Mammary epithelial cell (primary cell): ENCODE measurements at regions of chr14 and their contacts with region 1.

Region 1: DNA sequence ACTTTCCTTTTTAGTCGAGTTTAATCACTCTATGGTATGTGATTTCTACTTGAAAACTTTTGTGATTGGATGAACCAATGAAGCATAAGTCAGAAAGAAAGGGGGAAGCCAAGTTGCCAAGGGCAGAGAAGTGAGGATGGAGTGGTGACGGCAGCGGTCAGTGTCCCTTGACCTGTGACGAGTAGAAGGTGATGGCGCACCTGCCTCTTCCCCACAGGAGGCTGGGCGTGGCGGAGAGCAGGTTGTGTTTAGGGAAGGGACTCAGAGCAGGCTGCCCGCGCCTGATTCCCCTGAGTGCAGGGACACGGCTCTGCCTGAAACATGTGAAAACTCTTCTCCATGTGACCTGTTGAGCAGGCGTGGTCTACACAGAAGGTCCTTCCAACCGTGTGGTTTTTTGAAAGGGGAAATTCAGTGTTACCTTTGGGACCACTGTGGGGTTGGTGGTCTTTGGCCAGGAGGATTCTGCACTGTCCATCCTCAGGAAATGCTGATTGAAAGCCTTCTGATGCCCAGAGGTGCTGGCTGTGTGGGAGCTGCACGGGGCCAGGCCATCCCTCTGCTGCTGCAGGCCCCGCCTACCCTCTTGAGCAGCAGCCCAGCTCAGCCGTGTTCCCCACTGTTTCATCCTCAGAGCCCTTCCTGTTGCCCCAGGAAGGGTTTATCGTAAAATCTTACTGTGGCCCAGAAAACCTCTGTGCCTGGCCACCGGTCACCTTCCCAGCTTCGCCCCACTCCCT is 23.5 kb upstream of the AMN start:
- DNase-seq: no peak
- H3K4me3 ChIP-seq: no peak overlapping the region
- H3K27ac ChIP-seq: no peak overlapping the region
- H3K4me1 ChIP-seq: no peaks in the 10 kb centered on the region
- H3K27me3 ChIP-seq: no peaks in the 10 kb centered on the region
- CTCF ChIP-seq: no peak

Region 2: DNA sequence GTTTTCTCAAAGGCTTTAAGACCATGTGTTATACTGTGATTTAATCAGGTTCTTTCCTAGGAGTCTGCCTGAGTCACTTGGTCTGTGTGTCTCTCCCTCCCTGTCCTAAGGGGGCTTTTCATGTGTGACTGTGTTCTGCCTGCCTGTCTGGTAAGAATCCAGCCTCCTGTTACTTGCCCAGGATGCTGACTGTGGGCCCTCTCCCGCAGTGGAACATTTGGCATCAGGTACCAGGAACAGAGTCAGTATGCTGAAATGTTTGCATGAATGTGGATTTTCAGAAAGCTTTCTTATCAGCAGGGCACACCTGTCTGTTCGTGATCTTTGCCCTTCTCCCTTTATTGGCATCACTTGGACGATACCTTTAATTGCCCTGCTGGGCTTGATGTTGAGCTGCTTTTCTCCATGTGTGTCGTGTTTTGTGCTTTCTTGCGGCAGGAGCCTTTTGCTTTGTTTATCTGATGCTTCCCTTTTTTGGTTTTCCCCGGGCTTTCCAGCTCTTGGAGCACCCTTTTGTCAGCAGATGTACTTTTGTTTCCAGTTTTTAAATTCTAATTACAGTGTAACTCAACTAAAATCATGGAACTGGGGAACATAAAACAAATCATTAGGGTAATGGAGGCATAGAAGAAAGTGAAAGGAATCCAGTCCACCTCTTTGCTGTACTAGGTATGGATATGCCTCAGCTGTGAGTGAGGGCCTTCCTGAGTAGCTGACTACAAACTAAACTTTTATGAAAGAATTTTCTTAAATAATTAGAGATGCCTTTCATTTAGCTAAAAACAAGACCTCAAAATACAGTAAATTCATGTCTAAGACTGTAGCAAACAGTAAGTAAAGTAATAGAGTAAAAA is 49.2 kb before region 1 on chr14:
- CTCF ChIA-PET with region 1: no interaction called
- dilution Hi-C with region 1: loop called (anchors 5 kb)
- in situ Hi-C with region 1: no loop called
- intact Hi-C with region 1: no loop called
- DNase-seq: peak; percentile 30
- H3K4me3 ChIP-seq: no peak overlapping the region
- H3K27ac ChIP-seq: no peak overlapping the region
- H3K4me1 ChIP-seq: no peaks in the 10 kb centered on the region
- H3K27me3 ChIP-seq: no peaks in the 10 kb centered on the region
- CTCF ChIP-seq: no peak

Region 3: DNA sequence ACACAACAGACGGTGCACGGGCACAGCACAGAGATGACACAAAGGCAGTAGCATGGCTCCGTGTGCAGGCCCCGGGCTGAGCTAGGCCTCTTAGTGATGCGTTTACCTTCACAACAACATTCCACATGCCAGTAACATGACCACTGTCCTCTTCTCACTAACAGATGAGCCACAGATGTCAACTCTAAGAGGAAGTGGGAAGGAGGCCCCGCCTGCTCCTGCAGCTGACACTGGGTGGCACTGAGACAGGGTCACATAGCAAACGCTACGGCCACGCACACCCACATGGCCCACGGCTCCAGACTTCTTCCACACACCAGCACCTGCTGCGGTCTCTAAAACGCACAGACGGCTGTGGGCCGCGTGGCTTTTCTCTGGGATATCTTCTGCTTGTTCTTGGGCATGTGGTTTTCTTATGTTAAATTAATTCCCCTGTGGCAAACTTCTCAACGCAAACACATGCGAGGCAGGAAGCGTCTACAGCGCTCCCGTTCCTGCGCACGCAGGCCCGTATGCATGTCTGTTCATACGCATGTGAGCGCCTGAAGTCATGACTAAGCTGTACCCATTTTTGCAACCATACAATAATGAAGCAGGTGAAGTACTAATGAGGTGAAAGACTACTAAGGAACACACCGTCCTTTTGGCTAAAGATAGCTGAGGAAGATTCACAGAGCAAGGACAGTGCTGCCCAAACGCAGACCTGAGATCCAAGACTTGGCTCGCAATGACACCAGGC is 50.3 kb after region 1 on chr14:
- CTCF ChIA-PET with region 1: no interaction called
- dilution Hi-C with region 1: loop called (anchors 5 kb)
- in situ Hi-C with region 1: no loop called
- intact Hi-C with region 1: no loop called
- DNase-seq: no peak
- H3K4me3 ChIP-seq: no peak overlapping the region
- H3K27ac ChIP-seq: no peak overlapping the region
- H3K4me1 ChIP-seq: peaks cover 6% of the 10 kb centered on the region
- H3K27me3 ChIP-seq: no peaks in the 10 kb centered on the region
- CTCF ChIP-seq: no peak

Region 4: DNA sequence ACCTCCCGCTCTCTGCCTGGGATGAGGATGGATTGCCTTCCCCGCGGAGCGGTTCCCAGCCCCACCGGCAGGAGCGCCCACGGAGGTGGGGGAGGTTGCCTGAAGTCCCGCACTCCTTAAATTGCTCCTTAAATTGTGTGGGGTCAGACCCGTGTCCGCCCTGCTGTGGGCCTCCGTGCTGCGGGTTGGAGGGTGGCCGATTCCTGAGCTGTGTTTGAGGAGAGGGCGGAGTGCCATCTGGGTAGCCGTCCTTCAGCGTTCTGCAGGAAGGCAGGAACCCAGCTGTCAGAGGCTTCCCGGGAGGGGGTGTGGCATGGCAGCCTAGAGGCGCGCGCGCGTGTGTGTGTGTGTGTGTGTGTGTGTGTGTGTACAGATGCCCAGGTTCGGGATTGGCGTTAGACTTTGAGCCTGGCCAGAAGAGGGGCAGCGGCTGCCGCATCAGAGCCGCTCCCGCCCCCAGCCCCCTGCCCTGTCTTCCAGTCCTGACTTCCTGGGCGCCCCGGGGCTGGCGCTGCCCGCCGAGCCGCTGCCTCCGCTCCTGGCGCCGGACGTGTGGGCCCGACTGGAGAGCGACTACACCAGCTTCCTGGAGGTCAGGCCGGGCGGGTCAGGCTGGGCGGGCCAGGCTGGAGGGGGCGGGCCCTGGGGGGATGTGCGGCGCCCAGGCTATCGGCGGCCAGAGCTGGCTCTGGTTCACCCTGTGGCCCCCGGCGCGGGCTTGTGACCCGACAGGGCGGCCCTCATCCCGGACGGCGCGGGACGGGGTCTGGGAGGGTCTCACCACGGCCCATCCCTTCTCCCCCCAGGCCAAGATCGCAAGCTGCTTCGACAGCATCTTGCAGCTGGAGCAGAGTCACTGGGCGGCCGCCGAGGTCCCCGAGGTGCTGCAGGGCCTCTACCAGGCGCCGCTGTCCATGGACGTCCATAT is 204.8 kb after region 1 on chr14:
- CTCF ChIA-PET with region 1: no interaction called
- dilution Hi-C with region 1: no loop called
- in situ Hi-C with region 1: no loop called
- intact Hi-C with region 1: no loop called
- DNase-seq: peak; percentile 48
- H3K4me3 ChIP-seq: peak overlapping the region in 1 of 3 experiments; percentile 22
- H3K27ac ChIP-seq: no peak overlapping the region
- H3K4me1 ChIP-seq: peaks cover 14% of the 10 kb centered on the region
- H3K27me3 ChIP-seq: peaks cover 30% of the 10 kb centered on the region
- CTCF ChIP-seq: no peak